Esophagus squamous epithelium (tissue), 5 donors: ENCODE measurements at regions of chr12 and their contacts with region 1.

Region 1: GRCh38 chr12:68223083-68223747 is 2.4 kb downstream of the IL26 start:
- DNase-seq: no peak
- H3K4me3 ChIP-seq: no peak overlapping the region
- H3K27ac ChIP-seq: no peak overlapping the region
- H3K4me1 ChIP-seq: peaks cover 0 to 13% (median 0%) of the 10 kb centered on the region in 3 donors
- H3K27me3 ChIP-seq: peaks cover 0 to 8% (median 0%) of the 10 kb centered on the region in 4 donors
- CTCF ChIP-seq: peak; percentile 45 to 88 (median 80)
- POLR2A ChIP-seq: no peak

Region 2: DNA sequence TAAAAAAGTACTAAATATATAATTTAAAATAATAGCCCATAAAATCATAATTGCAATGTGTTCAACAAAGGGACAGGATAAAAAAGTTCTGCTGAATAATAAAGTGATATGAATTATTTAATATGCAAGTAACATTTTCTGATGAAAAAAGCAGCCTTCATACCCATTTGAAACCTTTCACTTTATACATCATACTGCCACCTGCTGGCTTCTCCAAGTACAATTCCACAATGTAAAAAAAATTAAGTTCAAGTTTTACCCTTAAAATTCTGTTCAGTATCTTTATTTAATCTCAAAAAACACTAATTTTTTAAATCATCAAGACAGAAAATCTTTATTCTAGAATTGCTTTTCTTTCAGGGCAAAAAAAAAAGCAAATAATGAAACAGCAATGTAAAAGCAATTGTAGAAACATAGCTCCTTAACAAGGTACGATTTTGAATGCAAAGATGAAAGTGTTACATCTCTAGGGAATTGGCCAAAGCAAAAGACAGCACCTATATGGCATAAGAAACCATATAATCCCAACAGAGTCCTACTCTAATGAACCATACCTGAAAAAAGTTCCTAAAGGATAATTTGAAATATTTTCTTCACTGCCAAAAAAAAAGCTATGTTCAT is 93.9 kb after region 1 on chr12:
- intact Hi-C with region 1: loop called (anchors 5 kb)
- DNase-seq: no peak
- H3K4me3 ChIP-seq: no peak overlapping the region
- H3K27ac ChIP-seq: no peak overlapping the region
- H3K4me1 ChIP-seq: no peaks in the 10 kb centered on the region
- H3K27me3 ChIP-seq: no peaks in the 10 kb centered on the region
- CTCF ChIP-seq: peak; percentile 54 to 75 (median 60)
- POLR2A ChIP-seq: no peak

Region 3: DNA sequence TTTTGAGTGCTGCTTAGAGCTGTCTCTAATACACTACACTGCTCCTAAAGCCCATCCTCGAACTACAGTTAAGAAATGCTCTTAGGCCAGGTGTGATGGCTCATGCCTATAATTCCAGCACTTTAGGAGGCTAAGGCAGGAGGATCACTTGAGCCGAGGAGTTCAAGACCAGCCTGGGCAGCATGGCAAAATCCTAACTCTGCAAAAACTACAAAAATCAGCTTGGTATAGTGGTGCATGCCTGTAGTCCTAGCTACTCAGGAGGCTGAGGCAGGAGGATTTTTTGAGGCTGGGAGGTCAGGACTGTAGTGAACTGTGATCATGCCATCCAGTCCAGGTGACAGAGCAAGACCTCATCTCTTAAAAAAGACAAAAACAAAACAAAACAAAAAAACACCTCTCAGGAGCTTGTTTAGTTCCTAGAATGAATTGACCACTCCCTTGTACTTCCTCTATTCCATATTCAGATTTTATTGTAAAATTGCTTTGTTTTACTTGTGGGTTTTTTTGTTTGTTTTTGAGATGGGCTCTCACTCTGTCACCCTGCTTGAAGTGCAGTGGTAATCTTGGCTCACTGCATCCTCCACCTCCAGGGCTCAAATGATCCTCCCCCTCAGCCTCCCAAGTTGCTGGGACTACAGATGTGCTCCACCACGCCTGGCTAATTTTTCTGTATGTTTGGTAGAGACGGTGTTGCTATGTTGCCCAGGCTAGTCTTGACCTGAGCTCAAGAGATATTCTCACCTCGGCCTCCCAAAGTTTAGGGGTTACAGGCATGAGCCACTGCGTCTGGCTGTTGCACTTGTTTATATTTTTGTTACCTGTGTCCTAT is 598.4 kb after region 1 on chr12:
- intact Hi-C with region 1: no loop called
- DNase-seq: no peak
- H3K4me3 ChIP-seq: no peak overlapping the region
- H3K27ac ChIP-seq: no peak overlapping the region
- H3K4me1 ChIP-seq: peaks cover 0 to 4% (median 0%) of the 10 kb centered on the region in 3 donors
- H3K27me3 ChIP-seq: no peaks in the 10 kb centered on the region
- CTCF ChIP-seq: no peak
- POLR2A ChIP-seq: no peak